A549 (cell line): ENCODE measurements at regions of chr2 and their contacts with region 1.

Region 1: DNA sequence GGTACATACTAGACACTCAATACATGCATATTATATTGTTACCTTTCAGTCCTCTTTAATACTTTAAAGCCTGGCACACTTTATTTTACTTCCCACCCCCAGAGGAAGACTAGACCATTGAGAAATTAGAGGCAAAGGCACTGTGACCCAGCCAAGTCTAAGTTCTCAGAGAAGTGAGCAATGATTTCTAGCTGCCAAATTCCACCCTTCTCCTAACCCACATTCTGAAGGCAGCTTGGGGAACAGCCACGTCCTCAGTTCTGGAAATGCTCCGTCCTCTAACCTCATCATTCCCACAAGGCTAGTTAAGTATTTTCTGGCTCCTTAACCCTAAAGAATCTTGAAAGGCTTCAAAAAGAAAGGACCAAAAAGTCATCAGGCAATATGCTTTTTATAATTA is 86.6 kb downstream of the COL5A2 start:
- DNase-seq: no peak
- ATAC-seq: no peak
- H3K4me3 ChIP-seq: no peak overlapping the region
- H3K27ac ChIP-seq: 0 out of 6 replicates have a peak overlapping the region, but pooled peaks of 1 of the 2 experiments have one; percentile 23
- H3K4me1 ChIP-seq: peaks cover 37% of the 10 kb centered on the region
- CTCF ChIP-seq: no peak
- EP300 ChIP-seq: no peak
- POLR2A ChIP-seq: no peak
- RAD21 ChIP-seq: no peak

Region 2: GRCh38 chr2:188884046-188884445 is 208.9 kb before region 1 on chr2:
- CTCF ChIA-PET with region 1: no interaction called
- POLR2A ChIA-PET with region 1: no interaction called
- DNase-seq: peak in 1 of 2 experiments; percentile 4
- ATAC-seq: no peak; a peak in 1 of 6 replicates
- H3K4me3 ChIP-seq: no peak overlapping the region
- H3K27ac ChIP-seq: peak overlapping the region; percentile 10 to 20; a peak in 1 of 6 replicates
- H3K4me1 ChIP-seq: peaks cover 13% of the 10 kb centered on the region; the same call in 2 of the 3 replicates
- CTCF ChIP-seq: no peak
- EP300 ChIP-seq: no peak
- POLR2A ChIP-seq: no peak
- RAD21 ChIP-seq: no peak

Region 3: GRCh38 chr2:189153619-189154018 is 60.7 kb after region 1 on chr2:
- CTCF ChIA-PET with region 1: interaction called, 13 read pairs
- POLR2A ChIA-PET with region 1: no interaction called
- DNase-seq: no peak
- ATAC-seq: peak in 1 of 2 experiments; percentile 13; a peak in 2 of 6 replicates
- H3K4me3 ChIP-seq: no peak overlapping the region
- H3K27ac ChIP-seq: no peak overlapping the region
- H3K4me1 ChIP-seq: peaks cover 71% of the 10 kb centered on the region
- CTCF ChIP-seq: no peak
- EP300 ChIP-seq: no peak
- POLR2A ChIP-seq: no peak
- RAD21 ChIP-seq: no peak

Region 4: DNA sequence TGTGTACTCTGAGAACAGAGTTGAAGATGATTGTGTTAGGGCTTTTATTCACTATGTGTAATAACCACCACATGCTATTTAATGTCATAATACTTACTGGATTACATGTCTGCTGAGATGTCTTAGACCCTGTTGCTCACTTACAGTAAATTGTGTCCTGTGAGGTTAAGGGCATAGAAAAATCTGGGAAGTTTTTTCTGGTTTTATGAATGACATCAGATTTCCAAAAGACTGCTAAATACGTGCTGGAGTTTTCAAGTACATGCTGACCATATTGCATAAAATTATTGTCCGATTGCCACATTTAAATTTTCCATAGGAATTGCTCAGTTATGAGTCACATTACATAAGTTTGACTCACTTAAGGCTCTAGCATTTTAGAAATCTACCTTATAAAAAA is 183.3 kb after region 1 on chr2:
- CTCF ChIA-PET with region 1: interaction called, 10 read pairs
- POLR2A ChIA-PET with region 1: no interaction called
- DNase-seq: peak in 1 of 2 experiments; percentile 89
- ATAC-seq: peak; percentile 86 to 94
- H3K4me3 ChIP-seq: no peak overlapping the region
- H3K27ac ChIP-seq: peak overlapping the region; percentile 82
- H3K4me1 ChIP-seq: peaks cover 34% of the 10 kb centered on the region
- CTCF ChIP-seq: no peak
- EP300 ChIP-seq: peak; percentile 80 to 82; a peak in 3 of 5 replicates
- POLR2A ChIP-seq: no peak
- RAD21 ChIP-seq: peak; percentile 14 to 49; a peak in 3 of 5 replicates

Region 5: DNA sequence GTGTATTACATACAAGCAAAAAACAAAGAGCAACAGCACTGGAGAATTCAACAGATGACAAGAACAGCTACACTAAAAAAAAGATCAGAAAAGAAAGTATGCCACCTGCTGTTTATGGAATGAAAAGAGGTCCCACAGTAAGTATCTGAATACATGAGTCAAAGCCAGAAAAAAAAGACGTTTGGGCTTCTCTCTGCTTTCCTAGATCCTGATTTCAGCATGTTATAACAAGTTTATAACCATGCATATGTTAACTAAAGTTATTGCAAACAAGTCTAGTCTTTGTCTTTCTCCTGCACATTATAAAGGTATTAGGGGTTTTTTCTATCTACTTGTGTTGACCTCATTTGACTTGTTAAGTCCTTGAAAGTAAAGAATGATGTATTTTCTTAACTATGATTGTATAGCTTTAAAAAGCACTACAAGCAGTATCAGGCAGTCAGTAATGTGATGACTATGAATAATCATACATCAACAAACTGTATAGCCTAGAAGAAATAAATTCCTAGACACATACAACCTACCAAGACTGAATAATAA is 195.1 kb after region 1 on chr2:
- CTCF ChIA-PET with region 1: interaction called, 24 read pairs
- POLR2A ChIA-PET with region 1: interaction called, 4 read pairs
- DNase-seq: peak; percentile 31 to 85
- ATAC-seq: peak; percentile 76 to 80; a peak in 5 of 6 replicates
- H3K4me3 ChIP-seq: no peak overlapping the region
- H3K27ac ChIP-seq: peak overlapping the region; percentile 70 to 80
- H3K4me1 ChIP-seq: peaks cover 45% of the 10 kb centered on the region
- CTCF ChIP-seq: peak; percentile 88
- EP300 ChIP-seq: no peak
- POLR2A ChIP-seq: no peak
- RAD21 ChIP-seq: peak; percentile 96 to 98

Region 6: GRCh38 chr2:189412330-189412953 is 319.5 kb after region 1 on chr2:
- CTCF ChIA-PET with region 1: interaction called, 20 read pairs
- POLR2A ChIA-PET with region 1: no interaction called
- DNase-seq: peak; percentile 12 to 53
- ATAC-seq: peak in 1 of 2 experiments; percentile 77; a peak in 3 of 6 replicates
- H3K4me3 ChIP-seq: no peak overlapping the region
- H3K27ac ChIP-seq: peak overlapping the region; percentile 61 to 66; a peak in 4 of 6 replicates
- H3K4me1 ChIP-seq: peaks cover 33% of the 10 kb centered on the region
- CTCF ChIP-seq: peak; percentile 94
- EP300 ChIP-seq: no peak
- POLR2A ChIP-seq: no peak
- RAD21 ChIP-seq: peak; percentile 95 to 97